K562 (cell line): ENCODE measurements at regions of chr2 and their contacts with region 1.

Region 1: GRCh38 chr2:144975881-144976280 is 456.0 kb upstream of the ZEB2 start:
- DNase-seq: no peak
- ATAC-seq: no peak
- H3K4me3 ChIP-seq: no peak overlapping the region
- H3K27ac ChIP-seq: no peak overlapping the region
- H3K4me1 ChIP-seq: no peaks in the 10 kb centered on the region
- H3K27me3 ChIP-seq: no peaks in the 10 kb centered on the region
- CTCF ChIP-seq: no peak
- EP300 ChIP-seq: no peak
- POLR2A ChIP-seq: no peak
- RAD21 ChIP-seq: no peak

Region 2: GRCh38 chr2:144753416-144753815 is 222.5 kb before region 1 on chr2:
- CTCF ChIA-PET with region 1: no interaction called
- POLR2A ChIA-PET with region 1: no interaction called
- in situ Hi-C with region 1: no loop called
- intact Hi-C with region 1: no loop called
- DNase-seq: no peak
- ATAC-seq: no peak
- H3K4me3 ChIP-seq: no peak overlapping the region
- H3K27ac ChIP-seq: no peak overlapping the region
- H3K4me1 ChIP-seq: no peaks in the 10 kb centered on the region
- H3K27me3 ChIP-seq: no peaks in the 10 kb centered on the region
- CTCF ChIP-seq: no peak
- EP300 ChIP-seq: no peak
- POLR2A ChIP-seq: no peak
- RAD21 ChIP-seq: no peak

Region 3: GRCh38 chr2:144875290-144875969 is 100.5 kb before region 1 on chr2:
- CTCF ChIA-PET with region 1: interaction called, 3 read pairs
- POLR2A ChIA-PET with region 1: interaction called, 5 read pairs
- in situ Hi-C with region 1: no loop called
- intact Hi-C with region 1: loop called (anchors 1 kb)
- DNase-seq: no peak
- ATAC-seq: no peak
- H3K4me3 ChIP-seq: no peak overlapping the region
- H3K27ac ChIP-seq: no peak overlapping the region
- H3K4me1 ChIP-seq: no peaks in the 10 kb centered on the region
- H3K27me3 ChIP-seq: no peaks in the 10 kb centered on the region
- CTCF ChIP-seq: no peak
- EP300 ChIP-seq: no peak
- POLR2A ChIP-seq: no peak
- RAD21 ChIP-seq: no peak

Region 4: GRCh38 chr2:144890828-144891227 is 85.1 kb before region 1 on chr2:
- CTCF ChIA-PET with region 1: no interaction called
- POLR2A ChIA-PET with region 1: no interaction called
- in situ Hi-C with region 1: loop called (anchors 5 kb)
- intact Hi-C with region 1: no loop called
- DNase-seq: peak in 3 of 4 experiments; percentile 16 to 71 (median 66)
- ATAC-seq: peak; percentile 91
- H3K4me3 ChIP-seq: no peak overlapping the region
- H3K27ac ChIP-seq: peak overlapping the region; percentile 58; the same call in 2 of the 3 replicates
- H3K4me1 ChIP-seq: peaks cover 0 to 16% of the 10 kb centered on the region in 2 experiments; a peak in 2 of 5 replicates
- H3K27me3 ChIP-seq: no peaks in the 10 kb centered on the region
- CTCF ChIP-seq: peak in 2 of 3 experiments; percentile 40 to 46; a peak in 4 of 6 replicates
- EP300 ChIP-seq: peak; percentile 80
- POLR2A ChIP-seq: no peak
- RAD21 ChIP-seq: peak; percentile 34 to 46; a peak in 3 of 4 replicates

Region 5: GRCh38 chr2:145157741-145158591 is 182.1 kb after region 1 on chr2:
- CTCF ChIA-PET with region 1: no interaction called
- POLR2A ChIA-PET with region 1: no interaction called
- in situ Hi-C with region 1: no loop called
- intact Hi-C with region 1: no loop called
- DNase-seq: no peak
- ATAC-seq: no peak; the same call in 2 of the 3 replicates
- H3K4me3 ChIP-seq: no peak overlapping the region
- H3K27ac ChIP-seq: no peak overlapping the region
- H3K4me1 ChIP-seq: no peaks in the 10 kb centered on the region
- H3K27me3 ChIP-seq: no peaks in the 10 kb centered on the region
- CTCF ChIP-seq: no peak
- EP300 ChIP-seq: no peak
- POLR2A ChIP-seq: no peak
- RAD21 ChIP-seq: no peak

Region 6: DNA sequence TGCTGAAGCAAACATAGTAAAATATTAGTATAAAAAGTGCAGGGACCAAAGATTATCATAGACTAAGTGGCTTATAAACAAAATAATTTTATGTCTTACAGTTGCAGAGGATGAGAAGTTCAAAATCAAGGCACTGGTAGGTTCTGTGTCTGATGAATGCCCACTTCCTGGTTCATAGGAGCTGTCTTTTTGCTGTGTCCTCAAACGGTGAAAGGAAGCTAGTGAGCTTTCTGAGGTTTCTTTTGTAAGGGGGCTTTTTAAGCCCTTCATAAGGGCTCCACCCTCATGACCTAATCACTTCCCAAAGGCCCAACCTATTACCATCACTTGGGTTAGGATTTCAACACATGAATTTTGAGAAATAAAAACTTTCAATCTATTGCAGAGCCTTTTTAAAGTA is 1922.2 kb after region 1 on chr2:
- CTCF ChIA-PET with region 1: no interaction called
- POLR2A ChIA-PET with region 1: no interaction called
- in situ Hi-C with region 1: no loop called
- intact Hi-C with region 1: no loop called
- DNase-seq: no peak
- ATAC-seq: no peak
- H3K4me3 ChIP-seq: no peak overlapping the region
- H3K27ac ChIP-seq: no peak overlapping the region
- H3K4me1 ChIP-seq: no peaks in the 10 kb centered on the region
- H3K27me3 ChIP-seq: no peaks in the 10 kb centered on the region
- CTCF ChIP-seq: no peak
- EP300 ChIP-seq: no peak
- POLR2A ChIP-seq: no peak
- RAD21 ChIP-seq: no peak